Breast epithelium (tissue), 4 donors: ENCODE measurements at regions of chr4 and their contacts with region 1.

Region 1: GRCh38 chr4:117801756-117802155 is 232.5 kb upstream of the NDST3 start:
- DNase-seq: no peak
- H3K4me3 ChIP-seq: no peak overlapping the region
- H3K27ac ChIP-seq: no peak overlapping the region
- H3K4me1 ChIP-seq: no peaks in the 10 kb centered on the region
- H3K27me3 ChIP-seq: no peaks in the 10 kb centered on the region
- CTCF ChIP-seq: no peak
- POLR2A ChIP-seq: no peak

Region 2: DNA sequence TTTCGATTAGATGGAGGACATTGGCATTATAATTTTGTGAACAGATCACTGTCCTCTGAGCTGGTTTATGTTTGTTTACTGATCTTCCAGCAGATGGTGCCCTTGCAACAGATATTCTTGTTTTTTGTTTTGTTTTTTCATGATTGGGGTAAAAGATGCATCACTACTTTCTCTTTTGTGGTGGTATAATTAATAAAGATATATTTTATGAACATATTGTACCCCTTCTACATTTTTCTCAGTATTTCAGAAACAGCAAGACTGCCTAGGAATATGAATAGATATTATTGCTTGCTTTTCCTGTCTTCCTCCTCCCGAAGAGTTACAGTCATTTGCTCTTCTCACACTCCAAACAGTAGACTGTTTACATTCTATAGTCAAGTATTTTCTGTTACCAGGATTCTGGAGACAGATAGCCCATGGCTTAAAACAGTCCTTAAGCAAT is 1621.6 kb before region 1 on chr4:
- intact Hi-C with region 1: no loop called
- DNase-seq: no peak
- H3K4me3 ChIP-seq: no peak overlapping the region
- H3K27ac ChIP-seq: no peak overlapping the region
- H3K4me1 ChIP-seq: no peaks in the 10 kb centered on the region
- H3K27me3 ChIP-seq: no peaks in the 10 kb centered on the region
- CTCF ChIP-seq: no peak
- POLR2A ChIP-seq: no peak

Region 3: GRCh38 chr4:116561768-116562167 is 1240.0 kb before region 1 on chr4:
- intact Hi-C with region 1: loop called (anchors 5 kb)
- DNase-seq: no peak
- H3K4me3 ChIP-seq: no peak overlapping the region
- H3K27ac ChIP-seq: no peak overlapping the region
- H3K4me1 ChIP-seq: no peaks in the 10 kb centered on the region
- H3K27me3 ChIP-seq: no peaks in the 10 kb centered on the region
- CTCF ChIP-seq: no peak
- POLR2A ChIP-seq: no peak

Region 4: GRCh38 chr4:117637347-117637746 is 164.4 kb before region 1 on chr4:
- intact Hi-C with region 1: no loop called
- DNase-seq: no peak
- H3K4me3 ChIP-seq: no peak overlapping the region
- H3K27ac ChIP-seq: no peak overlapping the region
- H3K4me1 ChIP-seq: no peaks in the 10 kb centered on the region
- H3K27me3 ChIP-seq: no peaks in the 10 kb centered on the region
- CTCF ChIP-seq: no peak
- POLR2A ChIP-seq: no peak

Region 5: DNA sequence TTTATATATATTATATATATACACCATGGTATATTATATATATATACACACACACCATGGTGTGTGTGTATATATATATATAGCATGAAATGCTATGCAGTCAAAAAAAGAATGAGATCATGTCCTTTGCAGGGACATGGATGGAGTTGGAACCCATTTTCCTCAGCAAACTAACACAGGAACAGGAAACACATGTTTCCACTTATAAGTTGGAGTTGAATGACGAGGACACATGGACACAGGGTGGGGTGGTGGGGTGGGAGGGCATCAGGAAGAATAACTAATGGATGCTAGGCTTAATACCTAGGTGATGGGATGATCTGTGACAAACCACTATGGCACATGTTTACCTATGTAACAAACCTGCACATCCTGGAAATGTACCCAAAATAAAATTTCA is 61.0 kb before region 1 on chr4:
- intact Hi-C with region 1: no loop called
- DNase-seq: no peak
- H3K4me3 ChIP-seq: no peak overlapping the region
- H3K27ac ChIP-seq: no peak overlapping the region
- H3K4me1 ChIP-seq: no peaks in the 10 kb centered on the region
- H3K27me3 ChIP-seq: no peaks in the 10 kb centered on the region
- CTCF ChIP-seq: no peak
- POLR2A ChIP-seq: no peak

Region 6: GRCh38 chr4:117868201-117868600 is 66.4 kb after region 1 on chr4:
- intact Hi-C with region 1: loop called (anchors 2 kb)
- DNase-seq: no peak
- H3K4me3 ChIP-seq: no peak overlapping the region
- H3K27ac ChIP-seq: no peak overlapping the region
- H3K4me1 ChIP-seq: no peaks in the 10 kb centered on the region
- H3K27me3 ChIP-seq: no peaks in the 10 kb centered on the region
- CTCF ChIP-seq: no peak
- POLR2A ChIP-seq: no peak